ENCODE measurements at regions of chr17 and their contacts with region 1.

Region 1: DNA sequence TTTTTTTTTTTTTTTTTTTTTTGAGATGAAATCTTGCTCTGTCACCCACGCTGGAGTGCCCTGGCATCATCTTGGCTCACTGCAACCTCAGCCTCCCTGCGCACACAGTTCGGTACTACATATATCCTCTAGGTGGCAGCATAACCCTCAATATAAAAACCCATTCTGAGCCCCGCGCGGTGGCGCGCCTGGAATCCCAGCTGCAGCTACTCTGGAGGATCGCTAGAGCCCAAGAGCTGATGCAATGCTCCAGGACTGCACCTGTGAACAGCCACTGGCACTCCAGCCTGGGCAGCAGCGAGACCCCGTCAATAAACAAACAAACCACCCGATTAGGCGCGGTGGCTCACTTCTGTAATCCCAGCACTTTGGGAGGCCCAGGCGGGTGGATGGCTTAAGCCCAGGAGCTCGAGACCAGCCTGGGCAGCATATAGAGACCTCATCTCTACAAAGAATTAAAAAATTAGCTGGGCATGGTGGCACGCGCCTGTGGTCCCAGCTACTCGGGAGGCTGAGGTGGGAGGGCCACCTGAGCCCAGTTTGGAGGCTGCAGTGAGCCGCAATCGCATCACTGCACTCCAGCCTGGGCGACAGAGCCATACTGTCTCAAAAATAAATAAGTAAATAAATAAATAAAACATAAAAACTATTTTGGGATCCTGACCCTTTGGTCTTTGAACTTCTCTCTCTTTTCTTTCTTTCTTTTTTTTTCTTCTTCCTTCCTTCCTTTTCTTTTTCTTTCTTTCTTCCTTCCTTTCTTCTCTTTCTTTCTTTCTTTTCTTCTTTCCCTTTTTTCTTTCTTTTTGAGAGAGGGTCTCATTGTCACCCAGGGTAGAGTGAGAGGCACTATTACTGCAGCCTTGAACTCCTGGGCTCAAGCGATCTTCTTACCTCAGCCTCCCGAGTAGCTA is 15.4 kb upstream of the AKAP10 start:
- DNase-seq: peak; percentile 91 to 94
- H3K4me3 ChIP-seq: no peak overlapping the region
- H3K27ac ChIP-seq: no peak overlapping the region
- H3K4me1 ChIP-seq: peaks cover 0 to 4% (median 2%) of the 10 kb centered on the region in 4 donors
- H3K27me3 ChIP-seq: no peaks in the 10 kb centered on the region
- CTCF ChIP-seq: peak; percentile 66 to 89

Region 2: DNA sequence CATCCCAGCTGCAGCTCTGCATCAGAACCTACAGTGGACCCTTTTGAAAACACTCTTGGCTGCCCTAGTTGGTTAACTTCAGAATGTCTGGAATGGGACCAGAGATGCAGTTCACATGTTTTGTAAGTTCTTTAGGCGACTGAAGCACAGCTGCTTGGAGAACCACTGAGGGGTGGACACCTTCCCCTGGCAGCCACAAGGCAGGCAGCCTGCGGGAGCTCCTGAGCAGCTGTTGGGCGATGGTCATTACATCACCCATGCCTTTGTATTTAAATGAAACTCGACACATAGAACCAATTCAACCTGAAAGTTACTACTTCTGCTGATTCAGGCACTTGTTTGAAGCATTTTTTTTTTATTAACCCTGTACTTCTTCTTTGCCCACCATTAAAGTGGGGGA is 322.8 kb after region 1 on chr17:
- intact Hi-C with region 1: loop called (anchors 10 kb)
- DNase-seq: no peak
- H3K4me3 ChIP-seq: no peak overlapping the region
- H3K27ac ChIP-seq: no peak overlapping the region
- H3K4me1 ChIP-seq: peaks cover 0 to 8% (median 3%) of the 10 kb centered on the region in 4 donors
- H3K27me3 ChIP-seq: no peaks in the 10 kb centered on the region
- CTCF ChIP-seq: no peak

Measured in tibial artery (tissue), 4 donors.